Cardiac septum (tissue), 1 donor: ENCODE measurements at regions of chr10 and their contacts with region 1.

Region 1: DNA sequence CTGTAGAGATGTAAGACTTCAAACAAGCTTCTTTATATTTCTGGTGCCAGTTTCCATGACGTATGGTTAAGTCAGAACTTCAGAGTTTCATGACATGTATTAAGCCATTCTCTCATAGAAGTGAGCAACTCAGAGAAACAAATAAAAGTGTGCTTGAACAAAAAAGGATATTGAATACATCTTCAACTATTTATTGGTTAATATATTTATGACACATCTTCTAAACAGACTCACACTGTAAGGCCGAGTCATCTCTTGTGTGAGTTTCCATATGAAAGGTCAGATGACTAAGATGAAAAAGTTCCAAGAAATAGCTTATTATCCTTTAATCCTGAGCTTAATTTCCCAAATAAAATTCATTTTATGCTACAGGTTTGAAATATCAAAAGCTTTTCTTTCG is 105.5 kb upstream of the CSTF2T start:
- DNase-seq: no peak

Region 2: DNA sequence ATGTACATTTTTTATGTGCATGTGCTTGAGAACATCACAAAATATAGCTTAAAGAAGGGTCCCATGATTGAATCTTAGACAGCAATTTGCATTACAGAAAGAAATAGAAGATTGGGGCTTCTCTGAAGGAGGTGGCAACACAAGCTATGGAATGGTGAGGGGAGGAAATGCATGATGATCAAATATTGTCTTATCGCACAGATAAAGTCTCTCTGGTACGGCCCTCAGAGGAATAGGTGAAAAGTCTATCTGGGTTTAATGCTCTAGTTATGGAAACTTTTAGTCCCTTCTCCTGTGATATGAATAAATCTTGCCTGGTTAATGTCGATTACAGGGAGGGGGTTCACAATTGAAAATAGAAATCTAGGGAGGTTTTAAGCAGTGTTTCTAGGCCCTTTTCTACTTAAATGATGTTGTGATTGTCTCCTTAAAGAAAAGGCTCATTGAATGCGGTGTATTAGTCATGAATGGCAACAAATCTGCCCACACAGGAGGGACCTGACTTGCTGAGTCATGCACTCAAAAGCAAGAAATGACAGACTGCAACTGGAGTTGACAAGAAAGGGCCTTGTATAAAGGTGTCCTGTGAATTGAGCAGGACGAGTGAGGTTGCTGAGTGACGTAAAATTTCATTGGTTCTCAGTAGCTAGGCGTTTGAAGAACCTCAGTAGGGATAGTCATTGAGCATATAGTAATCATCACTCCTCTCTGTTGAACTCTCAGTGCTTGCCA is 28.0 kb after region 1 on chr10:
- intact Hi-C with region 1: loop called (anchors 2 kb)
- DNase-seq: no peak

Region 3: GRCh38 chr10:51857305-51857704 is 52.4 kb after region 1 on chr10:
- intact Hi-C with region 1: no loop called
- DNase-seq: no peak